WTC11 (cell line): ENCODE measurements at regions of chr12 and their contacts with region 1.

Region 1: DNA sequence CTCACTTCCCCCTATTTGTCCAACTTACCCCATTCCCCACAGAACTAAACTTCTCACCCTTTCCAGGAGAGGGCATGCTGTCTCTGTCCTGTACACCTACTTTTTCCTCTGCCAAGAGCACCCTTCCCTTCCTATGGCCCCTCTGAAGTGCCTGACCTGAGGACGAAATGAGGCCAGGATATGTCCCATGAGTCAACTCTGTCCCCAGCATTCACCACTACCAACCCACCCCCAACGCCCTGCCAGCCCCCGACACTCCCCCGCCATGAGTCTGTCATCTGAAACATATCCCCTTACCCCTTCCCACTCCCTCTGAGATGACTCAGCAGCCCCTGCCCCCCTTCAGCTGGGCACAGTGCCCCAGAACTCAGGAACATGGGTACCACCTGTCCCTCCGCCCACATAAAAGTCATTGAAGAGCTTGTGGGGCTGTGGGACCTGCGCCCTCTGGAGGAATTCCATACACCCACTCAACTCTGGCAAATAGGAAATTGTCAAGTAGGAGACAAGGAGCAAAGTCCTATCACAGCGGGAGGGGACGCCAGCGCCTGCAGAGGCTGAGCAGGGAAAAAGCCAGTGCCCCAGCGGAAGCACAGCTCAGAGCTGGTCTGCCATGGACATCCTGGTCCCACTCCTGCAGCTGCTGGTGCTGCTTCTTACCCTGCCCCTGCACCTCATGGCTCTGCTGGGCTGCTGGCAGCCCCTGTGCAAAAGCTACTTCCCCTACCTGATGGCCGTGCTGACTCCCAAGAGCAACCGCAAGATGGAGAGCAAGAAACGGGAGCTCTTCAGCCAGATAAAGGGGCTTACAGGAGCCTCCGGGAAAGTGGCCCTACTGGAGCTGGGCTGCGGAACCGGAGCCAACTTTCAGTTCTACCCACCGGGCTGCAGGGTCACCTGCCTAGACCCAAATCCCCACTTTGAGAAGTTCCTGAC is 26.3 kb downstream of the ITGA7 start:
- DNase-seq: peak; percentile 81
- ATAC-seq: peak; percentile 89
- H3K4me3 Mint-ChIP-seq: peak overlapping the region; percentile 70
- H3K27ac Mint-ChIP-seq: 0 out of 2 replicates have a peak overlapping the region, but pooled peaks have one; percentile 25
- H3K4me1 Mint-ChIP-seq: peaks cover 14% of the 10 kb centered on the region
- H3K27me3 Mint-ChIP-seq: peaks cover 2% of the 10 kb centered on the region
- CTCF ChIP-seq: no peak

Region 2: GRCh38 chr12:55647027-55647426 is 34.4 kb before region 1 on chr12:
- CTCF ChIA-PET with region 1: interaction called, 12 read pairs
- POLR2A ChIA-PET with region 1: no interaction called
- DNase-seq: no peak
- ATAC-seq: no peak
- H3K4me3 Mint-ChIP-seq: no peak overlapping the region
- H3K27ac Mint-ChIP-seq: peak overlapping the region; percentile 52; the same call in 1 of the 2 replicates
- H3K4me1 Mint-ChIP-seq: peaks cover 19% of the 10 kb centered on the region
- H3K27me3 Mint-ChIP-seq: peaks cover 16% of the 10 kb centered on the region
- CTCF ChIP-seq: no peak

Region 3: GRCh38 chr12:55658635-55659391 is 22.6 kb before region 1 on chr12:
- CTCF ChIA-PET with region 1: interaction called, 25 read pairs
- POLR2A ChIA-PET with region 1: no interaction called
- DNase-seq: no peak
- ATAC-seq: no peak
- H3K4me3 Mint-ChIP-seq: no peak overlapping the region
- H3K27ac Mint-ChIP-seq: no peak overlapping the region
- H3K4me1 Mint-ChIP-seq: no peaks in the 10 kb centered on the region
- H3K27me3 Mint-ChIP-seq: peaks cover 9% of the 10 kb centered on the region
- CTCF ChIP-seq: no peak

Region 4: GRCh38 chr12:55670276-55670675 is 11.1 kb before region 1 on chr12:
- CTCF ChIA-PET with region 1: interaction called, 11 read pairs
- POLR2A ChIA-PET with region 1: no interaction called
- DNase-seq: no peak
- ATAC-seq: no peak
- H3K4me3 Mint-ChIP-seq: no peak overlapping the region
- H3K27ac Mint-ChIP-seq: no peak overlapping the region
- H3K4me1 Mint-ChIP-seq: no peaks in the 10 kb centered on the region
- H3K27me3 Mint-ChIP-seq: peaks cover 14% of the 10 kb centered on the region
- CTCF ChIP-seq: no peak

Region 5: GRCh38 chr12:55707841-55708694 is 26.7 kb after region 1 on chr12 and contains the start of gene ITGA7:
- CTCF ChIA-PET with region 1: interaction called, 66 read pairs
- POLR2A ChIA-PET with region 1: interaction called, 7 read pairs
- DNase-seq: peak; percentile 97
- ATAC-seq: peak; percentile 85
- H3K4me3 Mint-ChIP-seq: peak within 1 kb of the TSS; percentile 88
- H3K27ac Mint-ChIP-seq: peak within 1 kb of the TSS; percentile 91
- H3K4me1 Mint-ChIP-seq: peaks cover 36% of the 10 kb centered on the region
- H3K27me3 Mint-ChIP-seq: peaks cover 44% of the 10 kb centered on the region
- CTCF ChIP-seq: no peak
- total RNA-seq, gene ITGA7: 77.8 to 96.2 TPM (median 80.4 TPM) in 3 replicates

Region 6: DNA sequence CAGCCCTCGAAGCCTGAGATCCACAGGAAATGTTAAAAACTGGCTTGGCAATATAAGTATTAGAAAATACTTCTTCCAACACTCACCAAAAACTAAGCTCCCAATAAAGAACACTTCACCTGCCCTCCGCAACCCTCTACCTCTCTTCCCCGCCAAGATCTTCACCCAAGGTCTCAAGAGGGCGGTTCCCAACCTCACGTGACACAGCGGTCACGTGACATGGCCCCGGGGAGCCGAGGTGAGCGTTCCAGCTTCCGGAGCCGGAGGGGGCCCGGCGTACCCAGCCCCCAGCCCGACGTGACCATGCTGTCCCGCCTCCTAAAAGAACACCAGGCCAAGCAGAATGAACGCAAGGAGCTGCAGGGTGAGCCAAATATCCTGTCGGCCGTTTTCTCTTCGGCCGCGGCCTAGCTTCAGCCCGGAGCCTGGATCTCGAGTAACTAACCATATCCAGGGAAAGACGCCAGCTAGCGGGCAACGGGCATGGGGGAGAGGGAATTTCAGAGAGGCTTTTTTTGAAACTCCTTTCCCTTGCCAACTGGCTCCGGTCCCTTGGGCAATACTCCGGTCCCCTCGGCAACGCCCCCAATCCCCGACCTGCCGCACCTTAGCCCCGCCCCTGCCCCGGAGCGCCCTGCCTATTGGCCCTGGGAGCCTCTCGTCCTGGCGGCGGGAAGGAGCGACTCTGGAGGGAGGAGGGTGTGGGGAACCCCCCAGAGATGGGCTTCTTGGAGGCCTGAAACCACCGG is 34.6 kb after region 1 on chr12 and contains the start of gene BLOC1S1:
- CTCF ChIA-PET with region 1: interaction called, 20 read pairs
- POLR2A ChIA-PET with region 1: interaction called, 3 read pairs
- DNase-seq: peak; percentile 96
- ATAC-seq: peak; percentile 88
- H3K4me3 Mint-ChIP-seq: peak within 1 kb of the TSS; percentile 85
- H3K27ac Mint-ChIP-seq: peak within 1 kb of the TSS; percentile 84
- H3K4me1 Mint-ChIP-seq: peaks cover 37% of the 10 kb centered on the region
- H3K27me3 Mint-ChIP-seq: peaks cover 24% of the 10 kb centered on the region
- CTCF ChIP-seq: no peak
- total RNA-seq, gene BLOC1S1: 81.9 to 97.1 TPM (median 95.1 TPM) in 3 replicates

Region 7: GRCh38 chr12:55728939-55729823 is 47.8 kb after region 1 on chr12 and contains the start of gene CD63:
- CTCF ChIA-PET with region 1: interaction called, 11 read pairs
- POLR2A ChIA-PET with region 1: interaction called, 5 read pairs
- DNase-seq: peak; percentile 87
- ATAC-seq: peak; percentile 75
- H3K4me3 Mint-ChIP-seq: peak within 1 kb of the TSS; percentile 88
- H3K27ac Mint-ChIP-seq: peak within 1 kb of the TSS; percentile 75
- H3K4me1 Mint-ChIP-seq: peaks cover 31% of the 10 kb centered on the region
- H3K27me3 Mint-ChIP-seq: no peaks in the 10 kb centered on the region
- CTCF ChIP-seq: no peak
- total RNA-seq, gene CD63: 409 to 419 TPM (median 414 TPM) in 3 replicates

Region 8: GRCh38 chr12:55757701-55758100 is 76.3 kb after region 1 on chr12:
- CTCF ChIA-PET with region 1: no interaction called
- POLR2A ChIA-PET with region 1: no interaction called
- DNase-seq: no peak
- ATAC-seq: no peak
- H3K4me3 Mint-ChIP-seq: no peak overlapping the region
- H3K27ac Mint-ChIP-seq: peak overlapping the region; percentile 59
- H3K4me1 Mint-ChIP-seq: peaks cover 11% of the 10 kb centered on the region
- H3K27me3 Mint-ChIP-seq: no peaks in the 10 kb centered on the region
- CTCF ChIP-seq: no peak

Region 9: DNA sequence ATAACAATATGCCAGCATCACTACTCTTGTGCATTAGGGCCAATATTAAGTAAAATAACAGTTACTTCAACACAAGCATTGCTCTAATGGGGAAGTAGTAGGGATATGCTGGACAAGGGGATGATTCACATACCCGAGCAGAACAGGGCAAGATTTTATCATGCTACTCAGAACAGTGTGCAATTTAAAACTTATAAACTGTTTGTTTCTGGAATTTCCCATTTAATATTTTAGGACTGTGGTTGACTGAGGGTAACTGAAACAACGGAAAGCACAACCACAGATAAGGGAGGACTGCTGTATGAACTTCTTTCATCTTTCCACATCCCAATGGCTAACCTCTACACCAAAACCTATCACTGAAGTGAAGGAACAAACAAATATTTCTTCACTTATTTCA is 99.3 kb after region 1 on chr12:
- CTCF ChIA-PET with region 1: no interaction called
- POLR2A ChIA-PET with region 1: no interaction called
- DNase-seq: no peak
- ATAC-seq: no peak
- H3K4me3 Mint-ChIP-seq: no peak overlapping the region
- H3K27ac Mint-ChIP-seq: no peak overlapping the region
- H3K4me1 Mint-ChIP-seq: no peaks in the 10 kb centered on the region
- H3K27me3 Mint-ChIP-seq: no peaks in the 10 kb centered on the region
- CTCF ChIP-seq: no peak